ENCODE measurements at regions of chr3 and their contacts with region 1.

Region 1: GRCh38 chr3:43690400-43691119 is at the start of gene ABHD5:
- DNase-seq: peak; percentile 95
- ATAC-seq: peak; percentile 90
- H3K4me3 Mint-ChIP-seq: peak within 1 kb of the TSS; percentile 72
- H3K27ac Mint-ChIP-seq: peak within 1 kb of the TSS; percentile 75
- H3K4me1 Mint-ChIP-seq: peaks cover 36% of the 10 kb centered on the region
- H3K27me3 Mint-ChIP-seq: peaks cover 4% of the 10 kb centered on the region
- total RNA-seq, gene ABHD5: 8.6 to 9.8 TPM

Region 2: DNA sequence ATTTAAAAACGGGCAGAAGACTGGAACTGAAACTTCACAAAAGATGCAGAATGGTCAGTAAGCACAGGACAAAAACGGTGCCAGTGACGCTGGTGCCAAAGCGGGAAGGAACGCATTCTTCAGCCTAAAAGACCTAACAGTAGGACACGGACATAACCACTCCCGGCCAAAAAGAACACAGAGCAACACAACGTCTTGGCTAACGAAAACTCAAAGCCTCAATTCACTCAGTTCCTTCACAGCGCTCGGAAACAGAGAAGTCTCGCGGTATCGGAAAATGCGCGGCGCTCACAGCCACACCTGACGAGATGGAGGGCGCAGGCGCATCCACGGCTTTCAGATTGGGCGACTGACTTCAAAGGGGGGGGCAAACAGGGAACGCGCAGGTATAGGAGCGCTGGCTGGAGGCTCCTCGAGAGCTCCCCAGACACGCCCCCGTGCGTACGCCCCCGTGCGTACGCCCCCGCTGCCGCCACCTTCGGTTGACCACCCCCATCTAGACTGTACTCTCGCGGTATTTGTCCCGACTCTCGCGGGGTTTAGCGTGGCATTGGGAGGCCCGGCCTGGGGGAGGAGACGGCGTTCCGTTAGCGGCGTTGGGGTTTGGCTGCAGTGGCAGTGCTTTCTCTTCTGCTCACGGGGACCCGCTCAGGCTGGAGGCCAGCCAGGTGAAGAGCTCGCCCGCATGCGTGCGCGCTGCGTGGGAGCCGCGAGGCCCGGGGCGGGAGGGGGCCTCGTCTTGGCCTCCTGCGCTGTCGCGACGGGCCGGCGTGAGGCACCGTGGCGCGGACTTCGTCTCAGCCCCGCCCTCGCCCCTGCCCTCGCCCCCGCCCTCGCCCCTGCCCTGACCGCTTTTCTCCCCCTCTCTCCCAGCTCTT is 1090.2 kb before region 1 on chr3 and contains the start of gene NKTR:
- CTCF ChIA-PET with region 1: no interaction called
- POLR2A ChIA-PET with region 1: no interaction called
- intact Hi-C with region 1: loop called in 1 of 2 experiments (anchors 10 kb)
- DNase-seq: peak; percentile 100
- ATAC-seq: peak; percentile 91
- H3K4me3 Mint-ChIP-seq: peak within 1 kb of the TSS; percentile 80
- H3K27ac Mint-ChIP-seq: peak within 1 kb of the TSS; percentile 95
- H3K4me1 Mint-ChIP-seq: peaks cover 33% of the 10 kb centered on the region
- H3K27me3 Mint-ChIP-seq: no peaks in the 10 kb centered on the region
- total RNA-seq, gene NKTR: 50.8 to 59.2 TPM

Region 3: GRCh38 chr3:42804106-42804830 is 886.3 kb before region 1 on chr3 and contains the start of gene HIGD1A:
- CTCF ChIA-PET with region 1: no interaction called
- POLR2A ChIA-PET with region 1: no interaction called
- intact Hi-C with region 1: loop called in 1 of 2 experiments (anchors 10 kb)
- DNase-seq: peak; percentile 97
- ATAC-seq: peak; percentile 99
- H3K4me3 Mint-ChIP-seq: peak within 1 kb of the TSS; percentile 91
- H3K27ac Mint-ChIP-seq: peak within 1 kb of the TSS; percentile 86
- H3K4me1 Mint-ChIP-seq: peaks cover 41% of the 10 kb centered on the region
- H3K27me3 Mint-ChIP-seq: peaks cover 6% of the 10 kb centered on the region
- total RNA-seq, gene HIGD1A: 74.9 to 77.8 TPM

Region 4: DNA sequence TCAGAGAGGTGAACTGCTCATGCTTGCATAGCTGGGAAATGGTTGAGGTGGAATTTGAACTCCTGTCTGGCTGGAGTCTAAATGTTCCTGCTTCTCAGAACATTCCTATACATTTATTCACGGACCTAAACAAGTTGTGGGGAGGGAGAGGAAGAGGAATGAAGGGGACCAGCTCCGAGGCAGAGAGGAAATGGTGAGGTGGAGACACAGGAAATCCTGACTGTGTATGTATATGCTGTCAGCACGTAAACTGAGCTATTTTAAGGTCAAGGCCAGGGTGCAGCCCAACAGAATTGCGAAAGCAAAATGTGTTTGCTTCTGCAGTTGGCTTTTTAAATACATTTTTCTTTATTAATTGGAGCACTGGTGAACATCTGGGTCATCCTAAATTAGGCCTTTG is 510.5 kb before region 1 on chr3:
- CTCF ChIA-PET with region 1: no interaction called
- POLR2A ChIA-PET with region 1: no interaction called
- intact Hi-C with region 1: loop called in 1 of 2 experiments (anchors 2 kb)
- DNase-seq: peak; percentile 52
- ATAC-seq: peak; percentile 76
- H3K4me3 Mint-ChIP-seq: peak overlapping the region; percentile 17
- H3K27ac Mint-ChIP-seq: peak overlapping the region; percentile 66
- H3K4me1 Mint-ChIP-seq: peaks cover 53% of the 10 kb centered on the region
- H3K27me3 Mint-ChIP-seq: no peaks in the 10 kb centered on the region

Region 5: DNA sequence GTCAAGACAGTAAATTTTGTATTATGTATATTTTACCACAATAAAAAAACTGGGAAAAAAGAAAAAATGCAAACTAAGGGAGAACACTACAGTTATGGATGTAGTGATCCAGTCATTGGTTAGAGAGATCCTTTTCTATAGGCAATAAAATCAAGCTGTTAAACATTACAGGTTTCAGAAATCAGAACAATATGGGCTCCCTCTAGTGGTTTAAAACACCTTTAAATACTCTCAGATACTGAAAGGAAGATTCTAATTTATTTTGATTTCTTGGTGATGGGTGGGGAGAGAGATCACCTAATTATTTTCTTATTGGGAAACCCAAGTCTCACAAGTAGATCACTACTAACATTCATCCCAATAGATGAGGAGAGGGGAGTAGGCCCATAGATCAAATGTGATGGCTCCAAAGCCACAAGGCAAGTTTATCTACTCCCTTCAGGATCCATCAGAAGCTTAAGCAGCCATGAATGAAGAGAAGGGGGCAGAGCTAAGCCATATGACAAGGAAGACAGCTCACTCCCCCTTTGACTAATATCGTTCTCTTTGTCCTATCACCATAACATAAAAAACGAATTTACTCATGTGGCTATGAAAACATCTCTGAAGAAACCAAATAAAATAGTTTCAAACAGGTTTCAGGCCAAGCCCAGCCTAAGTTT is 187.4 kb before region 1 on chr3:
- CTCF ChIA-PET with region 1: no interaction called
- POLR2A ChIA-PET with region 1: no interaction called
- intact Hi-C with region 1: loop called in 1 of 2 experiments (anchors 2 kb)
- DNase-seq: no peak
- ATAC-seq: peak; percentile 20
- H3K4me3 Mint-ChIP-seq: no peak overlapping the region
- H3K27ac Mint-ChIP-seq: peak overlapping the region; percentile 30
- H3K4me1 Mint-ChIP-seq: peaks cover 62% of the 10 kb centered on the region
- H3K27me3 Mint-ChIP-seq: peaks cover 15% of the 10 kb centered on the region

Region 6: GRCh38 chr3:43515208-43515917 is 175.2 kb before region 1 on chr3:
- CTCF ChIA-PET with region 1: no interaction called
- POLR2A ChIA-PET with region 1: no interaction called
- intact Hi-C with region 1: no loop called
- DNase-seq: no peak
- ATAC-seq: peak; percentile 75
- H3K4me3 Mint-ChIP-seq: no peak overlapping the region
- H3K27ac Mint-ChIP-seq: no peak overlapping the region
- H3K4me1 Mint-ChIP-seq: peaks cover 12% of the 10 kb centered on the region
- H3K27me3 Mint-ChIP-seq: no peaks in the 10 kb centered on the region

Region 7: DNA sequence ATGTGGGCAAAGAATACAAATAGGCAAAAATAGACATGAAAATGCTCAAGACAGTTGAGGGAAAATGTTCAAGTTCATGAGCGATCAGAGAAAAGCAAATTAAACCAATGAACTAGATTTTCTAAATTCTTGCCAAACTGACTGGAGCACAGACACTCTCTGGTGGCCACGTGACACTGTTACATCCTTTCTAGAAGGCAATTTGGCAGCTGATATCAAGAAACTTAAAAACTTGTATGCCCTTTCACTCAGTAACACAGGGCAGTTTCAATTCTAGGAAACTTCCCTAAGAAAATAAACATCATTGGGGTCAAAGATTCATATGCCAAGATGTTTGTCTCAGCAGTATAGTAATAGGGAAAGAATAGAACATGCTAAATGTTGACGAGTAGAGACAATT is 52.4 kb after region 1 on chr3:
- CTCF ChIA-PET with region 1: no interaction called
- POLR2A ChIA-PET with region 1: no interaction called
- intact Hi-C with region 1: no loop called
- DNase-seq: no peak
- ATAC-seq: no peak
- H3K4me3 Mint-ChIP-seq: no peak overlapping the region
- H3K27ac Mint-ChIP-seq: no peak overlapping the region
- H3K4me1 Mint-ChIP-seq: no peaks in the 10 kb centered on the region
- H3K27me3 Mint-ChIP-seq: no peaks in the 10 kb centered on the region

Region 8: DNA sequence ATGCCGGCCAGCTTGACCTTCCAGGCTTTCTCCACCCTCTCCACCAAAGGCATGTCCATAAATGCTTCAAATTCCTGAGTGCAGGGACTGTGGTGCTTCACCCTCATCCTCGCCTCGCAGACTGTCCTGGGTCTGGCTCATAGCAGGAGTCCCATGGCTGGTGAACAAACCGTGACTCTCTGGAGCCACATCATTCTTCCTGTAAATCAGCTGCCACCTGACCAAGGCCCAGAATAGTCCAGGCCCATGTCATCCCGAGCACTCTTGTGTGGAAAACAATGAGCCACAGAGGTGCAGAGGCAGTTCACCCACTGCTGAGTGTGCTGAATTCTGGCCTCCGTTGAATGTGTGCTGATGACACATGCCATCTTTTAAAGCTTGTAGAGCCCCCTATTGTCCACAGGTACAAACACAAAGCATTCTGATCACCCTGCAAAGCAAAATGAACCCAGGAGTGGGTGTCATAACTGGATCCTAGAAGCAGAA is 68.8 kb after region 1 on chr3:
- CTCF ChIA-PET with region 1: no interaction called
- POLR2A ChIA-PET with region 1: no interaction called
- intact Hi-C with region 1: loop called (anchors 1 to 5 kb)
- DNase-seq: peak; percentile 20
- ATAC-seq: peak; percentile 62
- H3K4me3 Mint-ChIP-seq: no peak overlapping the region
- H3K27ac Mint-ChIP-seq: no peak overlapping the region
- H3K4me1 Mint-ChIP-seq: peaks cover 36% of the 10 kb centered on the region
- H3K27me3 Mint-ChIP-seq: no peaks in the 10 kb centered on the region

Region 9: DNA sequence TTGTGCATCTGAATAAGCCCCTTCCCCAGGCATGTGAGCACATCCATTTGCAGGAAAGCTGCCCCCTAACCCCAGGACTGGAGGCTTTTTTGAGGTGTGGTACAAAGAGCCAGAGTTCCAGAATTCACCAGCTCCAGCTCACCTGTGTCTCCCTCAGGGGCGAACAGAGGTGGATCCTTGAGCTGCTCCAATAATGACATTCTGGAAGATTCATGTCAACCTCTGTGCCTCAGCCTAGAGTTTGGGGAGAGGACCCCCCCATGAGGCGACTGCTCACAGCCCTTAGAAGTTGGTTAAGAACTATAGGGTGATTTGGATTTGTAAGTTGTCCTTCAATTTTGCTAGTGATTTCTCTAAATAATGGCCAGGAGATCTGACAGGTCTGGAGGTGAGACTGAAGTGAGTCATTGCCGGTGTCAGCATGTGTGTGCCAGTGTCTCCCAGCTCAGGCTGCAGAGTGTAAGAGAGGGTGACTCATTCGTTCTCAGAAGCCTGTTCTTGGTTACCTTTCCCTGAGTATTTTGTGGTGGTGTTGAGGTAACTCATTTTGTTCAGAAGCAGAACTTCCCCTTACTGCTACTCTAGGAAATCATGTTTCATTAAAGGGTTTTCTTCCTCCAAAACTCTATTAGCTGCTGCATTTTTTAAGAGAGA is 414.2 kb after region 1 on chr3:
- CTCF ChIA-PET with region 1: no interaction called
- POLR2A ChIA-PET with region 1: no interaction called
- intact Hi-C with region 1: no loop called
- DNase-seq: peak; percentile 78
- ATAC-seq: peak; percentile 100
- H3K4me3 Mint-ChIP-seq: no peak overlapping the region
- H3K27ac Mint-ChIP-seq: no peak overlapping the region
- H3K4me1 Mint-ChIP-seq: peaks cover 13% of the 10 kb centered on the region
- H3K27me3 Mint-ChIP-seq: peaks cover 31% of the 10 kb centered on the region

Region 10: DNA sequence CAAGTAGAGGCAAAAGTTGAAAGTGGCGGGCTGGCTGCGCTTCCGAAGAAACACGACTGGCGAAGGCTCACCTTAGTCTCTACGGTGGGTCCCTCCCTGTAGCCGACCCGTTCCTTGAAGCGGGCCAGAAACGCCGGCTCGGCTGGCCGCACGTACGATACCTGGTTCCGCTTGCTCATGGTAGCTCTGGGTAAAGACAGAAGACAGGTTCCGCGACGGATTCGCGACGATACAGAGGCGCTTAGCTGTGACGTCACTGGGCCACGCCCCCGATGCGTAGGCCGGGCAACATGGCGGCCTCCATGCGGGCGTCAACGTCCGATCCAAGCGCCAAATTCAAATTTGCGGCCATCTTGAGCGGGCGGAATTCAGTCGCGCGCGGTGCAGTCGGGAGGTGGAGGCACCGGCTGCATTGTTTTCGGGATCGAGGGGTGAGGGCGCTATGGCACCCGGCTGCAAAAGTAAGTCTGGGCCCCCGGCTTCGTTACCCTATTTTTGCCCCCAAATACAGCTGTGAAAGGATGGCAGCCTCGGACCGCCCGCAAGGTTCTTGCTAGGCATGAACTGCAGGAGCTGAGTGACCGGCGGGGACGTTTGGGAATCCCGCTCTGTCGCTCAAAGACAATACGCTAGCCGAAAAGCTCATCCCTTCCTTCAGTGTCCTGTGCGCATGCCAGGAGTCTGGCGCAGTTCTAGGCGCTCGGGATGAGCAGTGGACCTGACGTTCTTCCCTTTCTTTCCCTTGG is 1071.0 kb after region 1 on chr3 and contains the starts of genes KIAA1143 and KIF15:
- CTCF ChIA-PET with region 1: no interaction called
- POLR2A ChIA-PET with region 1: no interaction called
- intact Hi-C with region 1: loop called in 1 of 2 experiments (anchors 5 kb)
- DNase-seq: peak; percentile 99
- ATAC-seq: peak; percentile 94
- H3K4me3 Mint-ChIP-seq: peak within 1 kb of the TSS; percentile 88
- H3K27ac Mint-ChIP-seq: peak within 1 kb of the TSS; percentile 89
- H3K4me1 Mint-ChIP-seq: peaks cover 24% of the 10 kb centered on the region
- H3K27me3 Mint-ChIP-seq: no peaks in the 10 kb centered on the region
- total RNA-seq, gene KIAA1143: 40.2 to 74.1 TPM
- total RNA-seq, gene KIF15: 40.1 to 51.7 TPM

Measured in activated CD4-positive, alpha-beta T cell treated with anti-CD3 and anti-CD28 coated beads for 36 hours (primary cell).